MCF 10A (cell line): ENCODE measurements at regions of chr4 and their contacts with region 1.

Region 1: GRCh38 chr4:186765138-186765537 is 41.5 kb upstream of the FAT1 start:
- DNase-seq: peak; percentile 95
- H3K4me3 Mint-ChIP-seq: peak overlapping the region; percentile 60
- H3K27ac Mint-ChIP-seq: peak overlapping the region; percentile 88
- H3K4me1 Mint-ChIP-seq: peaks cover 27% of the 10 kb centered on the region
- H3K27me3 Mint-ChIP-seq: no peaks in the 10 kb centered on the region
- CTCF ChIP-seq: no peak

Region 2: DNA sequence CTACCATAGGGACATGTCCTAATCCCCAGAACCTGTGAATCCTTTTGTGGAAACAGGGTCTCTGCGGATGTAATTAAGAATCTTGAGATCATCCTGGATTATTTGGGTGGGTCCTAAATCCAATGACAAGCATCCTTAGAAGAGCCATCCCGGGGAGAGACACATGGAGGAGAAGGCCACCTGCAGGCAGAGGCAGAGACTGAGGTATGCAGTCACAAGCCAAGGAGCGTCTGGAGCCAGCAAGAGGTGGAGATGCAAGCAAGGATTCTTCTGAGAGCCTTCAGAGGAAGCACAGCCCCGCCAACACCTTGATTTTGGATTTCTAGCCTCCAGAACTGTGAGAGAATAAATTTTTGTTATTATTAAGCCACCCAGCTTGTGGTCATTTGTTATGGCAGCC is 27.7 kb before region 1 on chr4:
- CTCF ChIA-PET with region 1: interaction called, 3 read pairs
- POLR2A ChIA-PET with region 1: interaction called, 17 read pairs
- intact Hi-C with region 1: loop called (anchors 2 kb)
- DNase-seq: no peak
- H3K4me3 Mint-ChIP-seq: no peak overlapping the region
- H3K27ac Mint-ChIP-seq: peak overlapping the region; percentile 83
- H3K4me1 Mint-ChIP-seq: peaks cover 17% of the 10 kb centered on the region
- H3K27me3 Mint-ChIP-seq: no peaks in the 10 kb centered on the region
- CTCF ChIP-seq: no peak

Region 3: DNA sequence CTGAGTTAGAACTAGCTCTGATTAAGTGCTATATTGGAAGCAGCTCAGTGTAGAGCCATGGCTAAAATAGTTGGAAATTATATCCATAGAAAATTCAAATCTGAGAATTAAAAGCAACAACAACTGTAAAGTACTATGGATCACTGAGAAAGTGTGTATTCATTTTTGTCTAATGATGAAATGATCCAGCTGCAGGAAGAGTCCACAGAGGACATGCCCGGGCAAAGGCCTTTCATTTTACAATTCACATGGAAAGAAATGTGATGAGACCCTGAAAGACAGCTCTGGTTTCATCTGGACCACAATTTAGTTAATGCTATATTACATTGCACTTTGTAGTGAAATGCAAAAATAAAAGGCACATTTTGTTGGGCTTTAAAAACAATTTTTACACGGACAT is 155.3 kb after region 1 on chr4:
- CTCF ChIA-PET with region 1: interaction called, 3 read pairs
- POLR2A ChIA-PET with region 1: interaction called, 4 read pairs
- intact Hi-C with region 1: loop called (anchors 10 kb)
- DNase-seq: peak; percentile 45
- H3K4me3 Mint-ChIP-seq: no peak overlapping the region
- H3K27ac Mint-ChIP-seq: peak overlapping the region; percentile 99
- H3K4me1 Mint-ChIP-seq: peaks cover 16% of the 10 kb centered on the region
- H3K27me3 Mint-ChIP-seq: no peaks in the 10 kb centered on the region
- CTCF ChIP-seq: no peak